HAP-1 (cell line): ENCODE measurements at regions of chr3 and their contacts with region 1.

Region 1: DNA sequence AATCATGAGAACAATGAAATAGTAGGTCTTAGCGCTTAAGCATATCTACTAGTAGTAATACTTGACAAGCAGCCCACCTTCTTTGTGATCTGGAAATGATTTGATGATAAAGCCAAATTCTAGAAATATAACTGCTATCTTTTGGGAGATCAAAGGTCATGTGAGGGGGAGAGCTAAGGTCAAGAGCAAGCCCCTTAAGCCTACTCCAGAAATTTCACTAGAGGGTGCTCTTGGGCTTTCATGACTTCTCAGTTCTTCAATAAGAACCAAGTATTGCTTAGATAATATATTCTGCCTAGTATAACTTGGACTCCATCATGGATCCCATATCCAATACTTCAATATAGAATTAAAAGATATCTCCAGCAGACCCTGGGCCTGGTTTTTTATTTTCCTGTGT is 319.6 kb downstream of the ZBTB20 start:
- DNase-seq: peak; percentile 38 to 66
- H3K4me3 ChIP-seq: no peak overlapping the region
- H3K4me1 ChIP-seq: peaks cover 20% of the 10 kb centered on the region
- H3K27me3 ChIP-seq: no peaks in the 10 kb centered on the region

Region 2: DNA sequence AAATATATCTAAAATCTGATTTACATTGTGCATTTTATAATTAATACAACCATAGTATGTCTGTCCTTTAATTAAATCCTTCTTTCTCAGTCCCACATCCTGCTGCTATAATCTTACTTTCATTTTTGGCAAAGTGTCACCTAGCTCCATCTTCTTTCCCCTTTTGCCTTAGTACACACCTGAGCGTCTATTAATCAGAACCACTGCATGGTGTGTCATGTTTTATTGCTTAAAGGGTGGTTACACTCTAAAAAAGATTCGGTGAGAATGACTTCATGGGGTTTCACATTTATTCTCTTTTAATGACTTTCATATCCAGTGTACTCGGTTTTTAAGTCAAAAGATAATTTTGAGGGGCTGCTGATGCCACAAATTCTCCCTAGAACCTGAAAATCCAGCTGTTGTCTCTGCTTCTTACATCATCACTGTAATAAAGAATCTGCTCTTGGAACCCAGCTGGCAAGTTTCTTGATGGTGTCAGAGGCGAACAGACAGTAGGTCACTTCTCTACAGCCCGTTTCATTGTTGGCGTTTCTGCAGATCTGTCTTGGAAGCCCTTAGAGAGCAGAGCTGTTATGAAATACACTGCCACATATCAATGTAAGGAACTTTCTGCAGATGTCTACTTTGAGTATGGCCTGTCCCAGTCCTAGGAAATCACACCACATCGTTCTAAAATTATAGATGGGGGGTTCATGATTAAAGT is 434.0 kb before region 1 on chr3:
- in situ Hi-C with region 1: no loop called
- DNase-seq: no peak
- H3K4me3 ChIP-seq: no peak overlapping the region
- H3K4me1 ChIP-seq: peaks cover 4% of the 10 kb centered on the region; the same call in 1 of the 2 replicates
- H3K27me3 ChIP-seq: no peaks in the 10 kb centered on the region

Region 3: DNA sequence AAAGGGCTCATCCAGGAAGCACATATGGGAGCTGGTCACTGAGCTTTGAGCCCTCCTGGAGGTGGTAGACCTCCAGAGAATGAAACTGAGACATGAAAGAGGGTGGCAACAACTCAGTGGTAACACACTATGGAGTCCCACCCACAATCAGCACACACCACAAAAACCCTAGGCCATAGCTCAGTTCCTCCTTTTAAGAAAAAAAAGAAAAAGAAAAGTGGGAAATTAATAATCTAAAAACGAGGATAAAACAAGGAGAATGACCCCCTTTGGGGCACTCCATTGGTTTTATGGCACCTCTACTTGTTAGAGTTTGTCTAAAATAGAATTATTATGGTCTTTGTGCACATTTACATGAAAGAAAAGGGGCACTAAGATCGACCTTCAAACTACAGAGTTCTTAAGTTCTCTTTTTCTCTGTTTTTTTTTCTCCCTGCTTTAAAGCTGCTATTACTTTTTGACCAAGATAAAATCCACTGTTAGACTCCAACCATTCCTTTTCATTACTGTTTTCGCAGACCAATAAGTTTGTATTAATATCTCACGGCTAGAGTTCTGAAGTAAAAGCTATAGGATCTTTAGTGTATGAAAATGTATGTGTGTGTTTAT is 359.8 kb after region 1 on chr3:
- in situ Hi-C with region 1: loop called (anchors 25 kb)
- DNase-seq: no peak
- H3K4me3 ChIP-seq: no peak overlapping the region
- H3K4me1 ChIP-seq: no peaks in the 10 kb centered on the region
- H3K27me3 ChIP-seq: no peaks in the 10 kb centered on the region; the same call in 1 of the 2 replicates

Region 4: GRCh38 chr3:115692887-115693524 is 865.5 kb after region 1 on chr3:
- in situ Hi-C with region 1: loop called (anchors 25 kb)
- DNase-seq: peak; percentile 76 to 87
- H3K4me3 ChIP-seq: no peak overlapping the region
- H3K4me1 ChIP-seq: peaks cover 2% of the 10 kb centered on the region; the same call in 1 of the 2 replicates
- H3K27me3 ChIP-seq: no peaks in the 10 kb centered on the region

Region 5: DNA sequence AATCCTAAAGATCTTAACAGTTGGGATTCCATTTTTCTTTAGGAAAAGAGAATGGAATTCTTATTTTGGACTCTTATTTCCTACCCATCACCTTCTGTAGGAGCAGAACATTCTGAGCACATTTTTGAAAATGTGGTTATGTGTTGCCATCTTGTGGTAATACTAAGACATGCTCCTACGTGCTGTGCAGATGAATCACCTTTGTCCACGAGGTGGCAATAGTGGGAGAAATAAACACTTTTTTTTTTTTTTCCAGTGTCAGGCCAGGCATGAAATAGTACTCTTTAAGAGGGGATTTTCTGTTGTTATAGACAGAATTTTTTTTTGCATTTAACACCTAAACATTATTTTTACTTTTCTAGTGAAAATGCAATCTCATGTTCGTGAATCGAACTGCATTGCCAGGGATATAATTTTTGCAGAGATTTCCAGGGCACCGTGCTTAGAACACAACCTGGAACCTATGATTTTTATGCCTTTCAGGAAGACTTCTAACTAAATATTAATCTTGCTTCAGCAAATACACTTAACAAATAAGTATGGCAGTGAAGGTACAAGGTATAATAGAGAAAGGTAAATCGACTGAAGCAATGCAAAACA is 992.4 kb after region 1 on chr3:
- in situ Hi-C with region 1: loop called (anchors 25 kb)
- DNase-seq: peak; percentile 78 to 88
- H3K4me3 ChIP-seq: no peak overlapping the region
- H3K4me1 ChIP-seq: peaks cover 4% of the 10 kb centered on the region; the same call in 1 of the 2 replicates
- H3K27me3 ChIP-seq: no peaks in the 10 kb centered on the region